AG04450 (cell line): ENCODE measurements at regions of chr4 and their contacts with region 1.

Region 1: DNA sequence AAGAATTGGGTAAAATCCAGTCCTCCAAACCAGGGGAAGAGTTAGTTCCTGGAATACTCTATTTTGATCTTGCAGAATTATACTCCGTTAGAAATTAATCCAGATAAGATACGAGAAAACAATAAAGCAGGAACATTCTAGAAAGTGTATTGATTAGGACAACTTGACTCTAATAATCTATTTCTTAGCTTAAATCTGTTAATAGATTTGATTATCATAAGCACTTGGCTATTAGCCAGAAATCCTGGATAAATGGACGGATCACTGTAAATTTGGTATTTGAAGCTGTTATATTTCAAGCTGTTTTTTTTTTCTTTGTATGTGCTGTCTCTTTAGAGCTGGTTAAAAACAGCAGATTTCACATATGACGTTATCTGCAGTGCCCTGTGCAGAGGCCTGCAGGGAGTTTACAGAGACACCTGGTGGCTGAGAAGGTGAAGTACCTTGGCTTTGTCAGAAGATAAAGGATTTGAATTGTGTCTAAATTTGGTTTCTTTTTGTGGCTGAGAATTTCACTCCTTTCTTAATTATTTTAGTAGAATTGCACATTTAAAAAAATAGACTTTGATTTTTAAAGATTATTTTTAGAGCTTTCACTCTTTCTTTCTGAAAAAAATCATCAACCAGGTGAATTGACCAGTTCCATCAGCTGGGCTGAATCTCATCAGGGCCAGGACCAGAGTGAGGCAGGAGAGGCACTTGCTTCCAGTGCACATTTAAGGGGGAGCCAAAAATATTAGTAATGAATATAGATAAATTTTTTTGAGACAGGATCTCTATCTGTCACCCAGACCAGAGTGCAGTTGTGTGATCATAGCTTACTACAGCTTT is 9.7 kb upstream of the CHRNA9 start:
- DNase-seq: peak; percentile 50
- H3K4me3 ChIP-seq: no peak overlapping the region
- H3K27ac ChIP-seq: no peak overlapping the region
- H3K27me3 ChIP-seq: no peaks in the 10 kb centered on the region
- CTCF ChIP-seq: peak; percentile 93

Region 2: GRCh38 chr4:40056716-40057585 is 268.5 kb before region 1 on chr4 and contains the start of gene N4BP2:
- CTCF ChIA-PET with region 1: interaction called, 15 read pairs
- POLR2A ChIA-PET with region 1: interaction called, 10 read pairs
- DNase-seq: peak; percentile 38
- H3K4me3 ChIP-seq: peak within 1 kb of the TSS; percentile 79
- H3K27ac ChIP-seq: peak within 1 kb of the TSS; percentile 92
- H3K27me3 ChIP-seq: no peaks in the 10 kb centered on the region
- CTCF ChIP-seq: peak; percentile 62
- polyA plus RNA-seq, gene N4BP2: 3.2 and 5.7 TPM in 2 replicates

Region 3: DNA sequence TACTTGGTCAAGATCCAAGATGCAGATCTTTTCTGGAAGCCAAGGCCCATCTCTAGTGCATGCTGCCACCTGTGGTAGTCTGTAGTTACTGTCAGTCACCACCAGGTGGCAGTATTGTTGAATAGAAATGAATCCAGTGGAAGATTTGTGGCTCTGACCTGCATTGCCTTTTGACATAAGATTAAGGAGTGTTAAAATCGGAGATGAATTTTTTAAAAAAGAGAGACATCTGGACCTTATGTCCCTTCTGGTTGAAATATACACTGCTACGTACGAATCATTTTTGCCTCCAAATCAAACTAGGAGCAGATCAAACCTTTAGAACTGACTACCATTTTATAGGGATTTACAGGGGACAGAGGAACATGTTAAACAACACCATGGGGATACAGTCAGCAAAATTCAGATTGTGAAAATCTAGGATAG is 175.4 kb before region 1 on chr4:
- CTCF ChIA-PET with region 1: interaction called, 16 read pairs
- POLR2A ChIA-PET with region 1: no interaction called
- DNase-seq: peak; percentile 30
- H3K4me3 ChIP-seq: no peak overlapping the region
- H3K27ac ChIP-seq: no peak overlapping the region
- H3K27me3 ChIP-seq: no peaks in the 10 kb centered on the region
- CTCF ChIP-seq: peak; percentile 71

Region 4: GRCh38 chr4:40548296-40548695 is 222.9 kb after region 1 on chr4:
- CTCF ChIA-PET with region 1: no interaction called
- POLR2A ChIA-PET with region 1: no interaction called
- DNase-seq: no peak
- H3K4me3 ChIP-seq: no peak overlapping the region
- H3K27ac ChIP-seq: no peak overlapping the region
- H3K27me3 ChIP-seq: no peaks in the 10 kb centered on the region
- CTCF ChIP-seq: no peak

Region 5: DNA sequence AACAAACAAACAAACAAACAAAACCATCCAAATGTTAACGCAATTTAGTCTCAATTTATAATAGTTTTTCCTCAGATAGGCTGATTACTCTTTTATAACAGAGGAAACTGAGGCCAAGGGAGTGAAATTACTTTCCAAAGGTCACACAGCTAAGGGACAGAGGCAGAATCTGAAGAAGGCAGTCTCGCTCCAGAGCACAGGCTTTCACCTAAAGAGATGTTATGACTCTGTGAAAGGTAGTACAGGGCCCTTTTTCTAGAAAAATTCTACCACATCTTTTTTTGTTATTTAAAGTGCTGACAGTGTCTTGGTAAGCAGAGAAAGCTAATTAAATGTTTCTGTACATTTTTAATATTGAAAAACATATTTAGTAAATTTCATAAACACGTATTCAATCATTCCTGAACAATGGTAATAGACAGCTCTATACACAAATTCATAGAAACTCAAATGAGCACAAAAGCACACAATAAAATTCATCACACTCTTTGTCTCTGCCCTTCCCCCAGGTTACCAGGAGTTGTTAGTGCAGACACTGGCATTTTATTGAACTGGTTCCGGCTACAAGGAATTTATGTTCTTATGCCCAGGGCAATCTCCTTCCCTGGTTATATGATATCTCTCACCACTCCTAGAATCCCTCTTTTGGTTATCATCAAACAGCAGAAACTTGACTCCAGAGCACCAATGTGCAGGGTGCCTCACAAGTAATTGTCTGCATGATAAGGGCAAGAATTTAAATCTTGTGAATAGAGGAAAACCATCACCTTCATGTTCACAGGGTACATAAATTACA is 896.6 kb after region 1 on chr4:
- CTCF ChIA-PET with region 1: no interaction called
- POLR2A ChIA-PET with region 1: no interaction called
- DNase-seq: no peak
- H3K4me3 ChIP-seq: no peak overlapping the region
- H3K27ac ChIP-seq: no peak overlapping the region
- H3K27me3 ChIP-seq: no peaks in the 10 kb centered on the region
- CTCF ChIP-seq: no peak